AG04450 (cell line): ENCODE measurements at regions of chr3 and their contacts with region 1.

Region 1: GRCh38 chr3:16069149-16069922 is 105.1 kb upstream of the GALNT15 start:
- DNase-seq: peak; percentile 93
- H3K4me3 ChIP-seq: no peak overlapping the region
- H3K27ac ChIP-seq: peak overlapping the region; percentile 91
- H3K27me3 ChIP-seq: no peaks in the 10 kb centered on the region
- CTCF ChIP-seq: no peak

Region 2: GRCh38 chr3:16102905-16103364 is 33.6 kb after region 1 on chr3:
- CTCF ChIA-PET with region 1: no interaction called
- POLR2A ChIA-PET with region 1: interaction called, 11 read pairs
- DNase-seq: peak; percentile 78
- H3K4me3 ChIP-seq: no peak overlapping the region
- H3K27ac ChIP-seq: peak overlapping the region; percentile 99
- H3K27me3 ChIP-seq: no peaks in the 10 kb centered on the region
- CTCF ChIP-seq: peak; percentile 33